Heart left ventricle (tissue), 16 donors: ENCODE measurements at regions of chr6 and their contacts with region 1.

Region 1: DNA sequence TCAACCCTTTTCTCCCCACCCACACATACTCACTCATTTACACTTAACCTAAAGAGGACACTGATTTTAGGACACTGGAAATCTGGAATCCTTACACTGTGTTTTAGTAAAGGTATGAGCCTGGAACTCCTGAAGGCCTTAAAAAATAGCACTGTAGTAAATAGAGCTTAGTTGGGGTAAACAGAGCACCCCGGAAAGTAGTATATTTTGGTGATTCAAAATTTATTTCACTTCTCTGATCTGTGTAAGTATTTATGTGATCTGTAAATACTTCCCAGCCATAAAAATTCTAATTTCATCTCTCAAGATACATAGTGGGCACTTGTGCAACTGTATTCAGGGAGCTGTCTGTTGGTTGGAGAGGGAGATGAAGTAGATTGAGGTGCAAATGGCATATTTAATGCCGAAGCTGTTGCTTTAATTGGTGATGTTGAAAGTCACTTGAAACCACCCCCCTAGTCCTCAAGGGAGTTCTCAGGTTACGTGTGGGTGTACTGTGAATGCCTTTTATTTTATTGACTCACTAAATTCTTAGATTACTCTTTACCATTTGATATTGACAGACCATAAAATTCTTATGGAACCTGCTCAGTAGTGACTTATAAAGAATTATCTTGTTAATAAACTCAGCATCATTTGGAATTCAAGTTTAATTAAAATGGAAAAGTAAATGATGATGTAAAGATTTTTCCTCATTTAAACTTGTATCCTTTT is 154.9 kb downstream of the SOX4 start:
- DNase-seq: no peak
- ATAC-seq: no peak
- H3K4me3 ChIP-seq: no peak overlapping the region
- H3K27ac ChIP-seq: no peak overlapping the region
- H3K4me1 ChIP-seq: peaks cover 0 to 8% (median 2%) of the 10 kb centered on the region in 12 donors
- H3K27me3 ChIP-seq: no peaks in the 10 kb centered on the region
- CTCF ChIP-seq: no peak
- POLR2A ChIP-seq: no peak

Region 2: DNA sequence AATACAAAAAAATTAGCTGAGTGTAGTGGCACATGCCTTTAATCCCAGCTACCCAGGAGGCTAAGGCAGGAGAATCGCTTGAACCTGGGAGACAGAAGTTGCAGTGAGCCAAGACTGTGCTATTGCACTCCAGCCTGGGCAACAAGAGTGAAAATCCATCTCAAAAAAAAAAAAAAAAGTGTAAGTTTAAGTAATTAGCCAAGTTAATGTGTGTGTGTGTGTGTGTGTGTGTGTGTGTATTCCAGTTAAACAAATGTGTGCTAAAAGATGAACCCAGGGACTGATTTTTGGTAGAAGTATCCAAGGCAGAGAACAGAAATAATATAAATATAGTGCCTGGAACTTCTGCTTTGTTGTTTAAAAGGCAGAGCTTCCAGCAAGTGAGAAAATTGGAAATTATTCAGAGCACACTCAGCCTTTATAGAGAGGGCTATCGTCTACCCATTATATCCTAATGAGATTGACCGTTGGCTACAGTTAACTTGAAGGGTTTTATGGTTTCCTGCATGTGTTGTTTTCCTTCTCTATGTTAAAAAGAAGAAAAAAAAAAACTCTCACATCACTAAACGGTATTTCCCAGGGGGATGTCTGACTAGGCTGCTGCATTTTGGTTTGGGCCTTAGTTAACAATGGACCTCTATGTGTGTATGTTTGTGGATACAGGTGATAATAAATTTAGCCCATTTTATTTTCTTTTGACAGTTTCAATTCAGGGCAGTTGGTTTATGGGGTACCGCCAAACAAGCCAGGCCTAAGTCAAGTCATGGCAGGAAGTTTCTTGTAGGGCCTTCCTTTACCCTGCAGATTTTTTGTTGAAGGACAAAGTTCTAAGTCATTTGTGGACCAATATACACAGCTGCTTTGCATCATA is 145.2 kb before region 1 on chr6:
- intact Hi-C with region 1: loop called in 1 of 10 experiments (anchors 10 kb)
- DNase-seq: no peak
- ATAC-seq: no peak
- H3K4me3 ChIP-seq: no peak overlapping the region
- H3K27ac ChIP-seq: no peak overlapping the region
- H3K4me1 ChIP-seq: peaks cover 0 to 18% (median 13%) of the 10 kb centered on the region in 12 donors
- H3K27me3 ChIP-seq: no peaks in the 10 kb centered on the region
- CTCF ChIP-seq: no peak
- POLR2A ChIP-seq: no peak

Region 3: DNA sequence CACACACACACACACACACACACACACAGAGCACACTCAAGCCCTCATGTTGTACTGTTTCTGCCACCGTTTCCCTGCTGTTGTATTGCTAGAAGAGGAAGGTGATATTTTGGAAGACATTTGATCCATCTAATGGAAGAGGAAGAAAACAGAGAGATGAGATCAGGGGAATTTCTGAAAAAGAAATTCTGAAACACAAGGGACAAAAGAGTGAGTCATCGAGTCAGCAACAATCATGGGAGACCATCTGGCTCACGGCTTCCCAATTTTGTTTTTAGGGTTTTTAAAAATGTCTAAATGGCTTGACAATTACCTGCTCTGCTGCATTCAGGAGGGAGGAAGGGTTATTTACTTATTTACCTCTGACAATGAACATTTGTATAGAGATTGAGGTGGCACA is 133.0 kb before region 1 on chr6:
- intact Hi-C with region 1: no loop called
- DNase-seq: no peak
- ATAC-seq: no peak
- H3K4me3 ChIP-seq: no peak overlapping the region
- H3K27ac ChIP-seq: peak overlapping the region in 2 of 12 donors; percentile 13 to 33
- H3K4me1 ChIP-seq: peaks cover 0 to 9% (median 0%) of the 10 kb centered on the region in 12 donors
- H3K27me3 ChIP-seq: no peaks in the 10 kb centered on the region
- CTCF ChIP-seq: no peak
- POLR2A ChIP-seq: no peak

Region 4: GRCh38 chr6:21780679-21781078 is 32.2 kb after region 1 on chr6:
- intact Hi-C with region 1: no loop called
- DNase-seq: no peak
- ATAC-seq: no peak
- H3K4me3 ChIP-seq: no peak overlapping the region
- H3K27ac ChIP-seq: no peak overlapping the region
- H3K4me1 ChIP-seq: no peaks in the 10 kb centered on the region
- H3K27me3 ChIP-seq: no peaks in the 10 kb centered on the region
- CTCF ChIP-seq: no peak
- POLR2A ChIP-seq: no peak

Region 5: DNA sequence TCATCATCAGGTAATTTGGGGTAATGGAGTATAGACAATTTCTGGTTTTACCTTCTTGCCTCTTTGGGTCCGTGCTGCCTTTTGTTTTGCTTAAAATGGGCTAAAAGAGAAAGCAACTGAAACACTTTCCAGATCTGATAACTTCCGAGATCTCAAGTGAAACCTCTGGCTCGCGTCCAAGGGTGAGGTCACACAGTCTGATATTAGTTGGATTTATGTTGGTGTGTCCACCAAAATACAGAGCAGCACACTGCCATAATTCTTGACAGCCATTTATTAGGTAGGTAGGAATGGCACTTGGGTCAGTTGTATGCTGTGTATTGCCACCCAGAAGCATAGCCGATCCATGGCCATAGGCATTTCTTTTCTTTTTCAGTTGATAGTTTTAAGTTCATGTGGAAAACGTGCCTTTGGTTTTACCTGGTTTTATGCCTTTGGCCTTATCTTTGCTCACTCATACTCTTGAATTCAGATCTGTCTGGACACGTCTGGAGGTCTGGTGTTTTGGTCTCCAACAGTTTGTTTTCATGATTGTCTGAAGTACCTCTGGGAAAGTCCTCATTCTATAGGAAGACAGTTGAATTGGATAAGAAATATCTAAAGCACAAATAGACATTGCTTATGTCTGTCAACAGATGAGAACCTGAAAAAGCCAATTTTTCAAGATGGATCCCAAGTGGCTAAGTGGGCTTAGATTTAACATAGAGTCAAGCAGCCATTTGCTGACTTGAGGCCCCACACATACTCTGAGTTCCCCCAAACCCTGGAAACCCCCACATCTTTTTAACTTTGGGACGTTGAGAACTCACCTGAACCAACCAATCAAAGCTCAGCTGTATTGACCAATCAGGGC is 165.8 kb after region 1 on chr6:
- intact Hi-C with region 1: loop called in 1 of 10 experiments (anchors 10 kb)
- DNase-seq: peak; percentile 65 to 78 (median 75)
- ATAC-seq: peak in 1 of 4 donors; percentile 65
- H3K4me3 ChIP-seq: peak overlapping the region in 6 of 12 donors; percentile 4 to 35 (median 12)
- H3K27ac ChIP-seq: peak overlapping the region in 1 of 12 donors; percentile 7
- H3K4me1 ChIP-seq: peaks cover 0 to 27% (median 1%) of the 10 kb centered on the region in 12 donors
- H3K27me3 ChIP-seq: no peaks in the 10 kb centered on the region
- CTCF ChIP-seq: no peak
- POLR2A ChIP-seq: no peak